MCF 10A (cell line): ENCODE measurements at regions of chr22 and their contacts with region 1.

Region 1: DNA sequence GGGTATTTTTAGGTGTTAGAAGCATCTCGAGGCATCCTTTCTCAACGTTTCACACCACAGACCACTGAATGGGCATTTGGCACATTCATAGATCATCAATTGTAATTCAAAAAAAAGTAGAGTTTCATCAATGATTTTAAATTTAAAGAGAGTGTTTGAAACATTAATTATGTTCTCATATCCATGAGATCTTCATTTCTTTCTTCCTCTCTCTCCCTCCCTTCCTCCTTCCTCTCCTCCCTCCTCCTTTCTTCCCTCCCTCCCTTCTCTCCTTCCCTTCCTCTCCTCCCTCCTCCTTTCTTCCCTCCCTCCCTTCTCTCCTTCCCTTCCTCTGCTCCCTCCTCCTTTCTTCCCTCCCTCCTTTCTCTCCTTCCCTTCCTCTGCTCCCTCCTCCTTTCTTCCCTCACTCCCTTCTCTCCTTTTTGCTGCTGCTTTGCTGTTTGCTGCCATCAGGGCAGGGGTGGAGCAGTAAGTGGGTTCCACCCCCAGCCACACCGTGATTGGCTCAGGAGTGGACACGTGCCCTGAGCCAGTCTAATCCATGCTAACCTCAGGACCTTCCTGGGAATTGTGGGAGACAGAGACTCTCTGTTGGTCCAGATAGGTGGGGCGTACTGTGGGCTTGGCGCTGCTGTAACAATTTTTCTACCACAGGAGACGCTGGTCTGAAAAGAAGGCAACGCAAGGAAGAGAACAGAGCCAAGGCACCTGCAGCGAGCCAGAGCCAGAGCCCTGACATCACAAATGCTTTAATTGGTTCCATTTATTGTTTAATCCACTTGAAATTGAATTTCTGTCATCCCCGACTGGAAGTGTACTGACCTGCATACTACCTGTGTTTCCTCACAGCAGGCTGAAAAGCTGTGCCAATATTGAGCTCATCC is 33.7 kb upstream of the APOBEC3A start:
- DNase-seq: peak; percentile 62
- H3K4me3 Mint-ChIP-seq: peak overlapping the region; percentile 66
- H3K27ac Mint-ChIP-seq: no peak overlapping the region
- H3K4me1 Mint-ChIP-seq: peaks cover 14% of the 10 kb centered on the region
- H3K27me3 Mint-ChIP-seq: peaks cover 16% of the 10 kb centered on the region
- CTCF ChIP-seq: no peak

Region 2: GRCh38 chr22:38843201-38843715 is 80.4 kb before region 1 on chr22:
- CTCF ChIA-PET with region 1: no interaction called
- POLR2A ChIA-PET with region 1: no interaction called
- intact Hi-C with region 1: no loop called
- DNase-seq: no peak
- H3K4me3 Mint-ChIP-seq: peak overlapping the region; percentile 62
- H3K27ac Mint-ChIP-seq: no peak overlapping the region
- H3K4me1 Mint-ChIP-seq: peaks cover 14% of the 10 kb centered on the region
- H3K27me3 Mint-ChIP-seq: peaks cover 51% of the 10 kb centered on the region
- CTCF ChIP-seq: no peak

Region 3: GRCh38 chr22:38935023-38935422 is 11.3 kb after region 1 on chr22:
- CTCF ChIA-PET with region 1: interaction called, 6 read pairs
- POLR2A ChIA-PET with region 1: interaction called, 11 read pairs
- intact Hi-C with region 1: no loop called
- DNase-seq: peak; percentile 91
- H3K4me3 Mint-ChIP-seq: no peak overlapping the region
- H3K27ac Mint-ChIP-seq: no peak overlapping the region
- H3K4me1 Mint-ChIP-seq: peaks cover 8% of the 10 kb centered on the region
- H3K27me3 Mint-ChIP-seq: peaks cover 71% of the 10 kb centered on the region
- CTCF ChIP-seq: no peak

Region 4: DNA sequence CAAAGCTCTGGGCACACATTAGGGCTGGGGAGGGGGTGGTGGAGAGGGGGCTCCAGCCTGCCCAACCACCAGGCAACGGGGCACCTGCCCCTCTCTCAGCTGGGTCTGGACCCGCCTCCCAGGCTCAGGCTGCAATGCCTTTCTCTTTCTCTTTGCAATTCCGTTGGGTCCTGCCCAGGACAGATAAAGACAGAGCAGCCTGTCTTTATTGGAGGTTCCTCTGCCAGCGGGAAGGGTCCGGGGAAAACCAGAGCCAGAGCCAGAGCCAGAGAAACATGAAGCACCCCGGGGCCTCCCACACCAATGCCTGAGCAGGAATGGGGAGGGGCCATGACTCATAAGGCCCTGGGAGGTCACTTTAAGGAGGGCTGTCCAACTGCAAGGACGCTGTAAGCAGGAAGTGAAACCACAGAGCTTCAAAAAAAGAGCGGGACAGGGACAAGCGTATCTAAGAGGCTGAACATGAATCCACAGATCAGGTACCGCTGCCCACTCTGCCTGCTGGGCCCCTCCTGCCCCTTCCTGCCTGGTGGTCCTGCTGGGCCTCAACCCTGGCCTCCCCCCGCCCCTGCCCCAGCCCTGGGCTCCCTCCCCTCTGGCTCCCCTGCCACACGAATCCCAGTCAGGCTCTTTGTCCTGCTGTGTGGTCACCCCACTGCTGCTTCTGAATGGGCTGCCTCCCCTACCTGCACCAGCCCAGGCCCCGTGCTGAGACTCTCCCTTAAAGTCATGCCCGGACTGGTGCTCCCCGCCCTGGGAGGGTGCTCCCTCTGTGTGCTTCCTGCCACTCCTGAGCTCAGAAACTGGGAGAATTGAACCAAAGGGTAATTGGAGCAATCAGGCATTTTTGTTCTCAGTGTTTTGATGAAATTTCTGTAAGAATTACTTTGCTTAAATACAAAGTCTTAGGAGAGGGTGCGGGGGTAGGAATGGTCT is 58.6 kb after region 1 on chr22 and contains the start of gene APOBEC3B:
- CTCF ChIA-PET with region 1: interaction called, 3 read pairs
- POLR2A ChIA-PET with region 1: interaction called, 6 read pairs
- intact Hi-C with region 1: loop called (anchors 1 kb)
- DNase-seq: peak; percentile 98
- H3K4me3 Mint-ChIP-seq: peak within 1 kb of the TSS; percentile 73
- H3K27ac Mint-ChIP-seq: peak within 1 kb of the TSS; percentile 70
- H3K4me1 Mint-ChIP-seq: peaks cover 15% of the 10 kb centered on the region
- H3K27me3 Mint-ChIP-seq: peaks cover 25% of the 10 kb centered on the region
- CTCF ChIP-seq: no peak
- total RNA-seq, gene APOBEC3B: 1.0 and 1.1 TPM in 2 replicates